Heart right ventricle (tissue), 16 donors: ENCODE measurements at regions of chr19 and their contacts with region 1.

Region 1: GRCh38 chr19:54218960-54219661 is 3.7 kb downstream of the LILRB3 start:
- DNase-seq: no peak
- ATAC-seq: no peak
- H3K4me3 ChIP-seq: no peak overlapping the region
- H3K27ac ChIP-seq: no peak overlapping the region
- H3K4me1 ChIP-seq: peaks cover 0 to 14% (median 0%) of the 10 kb centered on the region in 9 donors
- H3K27me3 ChIP-seq: peaks cover 0 to 24% (median 18%) of the 10 kb centered on the region in 7 donors
- CTCF ChIP-seq: no peak

Region 2: DNA sequence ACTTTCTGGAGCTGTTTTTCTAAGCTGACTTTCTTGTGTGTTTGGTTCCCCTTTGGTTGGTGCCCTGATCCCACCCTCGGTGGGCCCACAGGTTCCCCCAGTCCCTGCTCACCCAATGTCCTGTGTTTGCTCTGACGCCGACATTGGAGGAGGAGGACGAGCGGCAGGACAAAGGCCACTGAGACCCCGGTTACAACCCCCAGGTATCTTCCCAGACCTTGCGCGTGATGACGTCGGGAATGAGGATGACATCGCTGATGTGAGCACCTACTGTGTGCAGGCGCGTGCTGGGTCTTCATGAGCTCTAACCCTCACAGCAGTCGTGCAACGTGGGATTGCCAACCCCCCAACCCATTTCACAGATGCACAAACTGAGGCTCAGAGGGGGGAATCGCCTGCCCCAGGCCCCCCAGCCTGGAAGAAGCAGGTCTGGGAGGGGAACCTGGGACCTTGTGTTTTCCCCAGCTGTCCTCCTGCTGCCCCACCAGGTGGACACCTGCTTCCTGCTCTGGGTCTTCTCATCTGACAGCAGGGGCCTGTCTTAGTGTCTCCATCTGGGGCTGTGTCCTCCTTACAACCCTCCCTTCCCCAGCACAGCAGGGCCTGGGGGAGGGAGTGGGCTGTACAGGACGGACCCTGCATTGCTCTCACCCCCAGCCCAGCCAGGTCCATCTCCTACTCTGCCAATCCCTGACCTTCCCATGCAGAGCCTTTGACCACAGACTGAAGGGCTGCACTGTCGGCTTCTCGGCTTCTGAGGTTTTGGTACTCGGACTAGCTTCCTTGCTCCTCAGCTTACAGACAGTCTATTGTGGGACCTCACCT is 28.2 kb after region 1 on chr19:
- intact Hi-C with region 1: loop called in 3 of 10 experiments (anchors 2 kb)
- DNase-seq: no peak
- ATAC-seq: peak in 4 of 8 donors; percentile 16 to 32 (median 28)
- H3K4me3 ChIP-seq: no peak overlapping the region
- H3K27ac ChIP-seq: peak overlapping the region in 5 of 10 donors; percentile 2 to 88 (median 64)
- H3K4me1 ChIP-seq: peaks cover 0 to 24% (median 0%) of the 10 kb centered on the region in 9 donors
- H3K27me3 ChIP-seq: peaks cover 0 to 13% (median 5%) of the 10 kb centered on the region in 7 donors
- CTCF ChIP-seq: no peak